Activated naive CD4-positive, alpha-beta T cell treated with anti-CD3 and anti-CD28 coated beads for 36 hours (primary cell): ENCODE measurements at regions of chr16 and their contacts with region 1.

Region 1: DNA sequence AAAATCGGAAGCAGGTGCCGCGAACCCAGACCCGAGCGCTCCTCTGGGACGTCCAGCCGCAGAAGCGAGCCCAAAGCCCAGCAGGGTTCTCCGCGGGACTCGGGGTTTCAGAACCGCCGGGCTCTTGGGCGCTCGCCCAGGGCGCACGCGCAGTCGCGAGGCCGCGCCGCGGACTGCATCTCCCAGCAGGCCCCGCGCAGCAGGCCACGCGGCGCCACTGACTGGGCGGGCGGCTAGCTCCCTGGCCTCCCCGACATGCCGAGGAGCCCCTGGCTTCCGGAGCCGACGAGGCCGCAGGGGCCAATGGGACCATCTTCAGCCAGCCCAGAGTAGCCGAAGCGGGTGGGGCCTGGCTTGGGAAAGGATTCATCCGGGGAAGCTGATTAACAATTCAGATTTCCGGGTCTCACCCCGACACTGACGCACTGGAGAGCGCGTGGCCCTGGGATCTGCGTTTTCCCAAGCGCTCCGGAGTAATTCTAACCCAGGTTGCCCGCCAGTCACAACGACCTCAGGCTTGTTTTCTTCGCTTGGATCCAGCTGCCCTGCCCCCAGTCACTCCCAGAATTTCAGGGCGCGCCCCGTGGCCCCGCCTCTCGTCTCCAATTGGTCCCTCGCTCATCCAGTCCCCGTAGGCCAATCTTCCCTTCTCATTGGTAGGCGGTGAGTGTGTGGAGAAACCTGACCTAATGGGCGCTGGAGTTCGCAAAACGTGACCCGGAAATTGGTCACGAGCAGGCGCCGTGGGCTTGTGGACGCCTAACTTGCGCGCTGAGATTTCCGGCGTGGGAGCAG is at the start of gene ZNF263:
- DNase-seq: peak; percentile 96
- H3K4me3 Mint-ChIP-seq: peak within 1 kb of the TSS; percentile 95
- H3K27ac Mint-ChIP-seq: peak within 1 kb of the TSS; percentile 97
- H3K4me1 Mint-ChIP-seq: peaks cover 28% of the 10 kb centered on the region
- H3K27me3 Mint-ChIP-seq: no peaks in the 10 kb centered on the region
- total RNA-seq, gene ZNF263: 9.1 to 12.2 TPM

Region 2: DNA sequence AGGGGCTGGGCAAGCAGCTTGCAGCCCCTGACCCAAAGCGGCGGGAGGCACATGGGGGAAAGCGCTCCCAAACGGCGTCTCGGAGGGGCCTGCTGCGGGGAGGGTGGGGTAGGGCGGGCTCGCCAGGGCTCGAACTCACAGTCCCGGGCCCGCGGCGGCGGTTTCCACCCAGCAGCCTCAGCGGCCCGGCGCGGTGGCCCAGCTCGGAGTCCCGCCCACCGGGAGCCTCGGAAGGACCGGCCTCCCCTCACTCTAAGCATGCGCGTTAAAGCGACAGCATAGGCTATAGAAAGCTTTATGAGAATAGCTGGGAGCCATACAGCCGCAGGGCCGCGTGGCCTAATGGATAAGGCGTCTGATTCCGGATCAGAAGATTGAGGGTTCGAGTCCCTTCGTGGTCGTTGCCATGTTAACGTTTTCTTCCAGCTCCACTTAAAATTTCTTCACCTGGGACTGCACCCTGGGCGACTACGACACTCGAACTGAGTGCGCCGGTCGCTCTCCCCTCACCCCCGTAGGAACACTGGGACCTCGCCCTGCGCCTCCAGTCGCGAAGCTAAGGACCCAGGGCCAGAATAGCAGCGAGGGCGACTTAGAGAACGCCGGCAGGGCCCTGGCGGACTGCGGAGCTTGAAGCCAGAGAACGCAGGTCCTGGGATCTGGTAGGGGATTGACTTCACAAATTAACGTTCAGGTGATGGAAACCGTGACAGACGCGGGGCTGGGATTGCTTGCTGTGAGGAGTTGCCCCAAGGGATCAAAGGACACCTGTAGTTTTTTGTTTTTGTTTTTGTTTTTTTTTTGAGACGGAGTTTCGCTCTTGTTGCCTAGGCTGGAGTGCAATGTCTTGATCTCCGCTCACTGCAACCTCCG is 132.3 kb before region 1 on chr16:
- CTCF ChIA-PET with region 1: no interaction called
- intact Hi-C with region 1: loop called (anchors 1 kb)
- DNase-seq: peak; percentile 100
- H3K4me3 Mint-ChIP-seq: peak overlapping the region; percentile 88
- H3K27ac Mint-ChIP-seq: peak overlapping the region; percentile 86
- H3K4me1 Mint-ChIP-seq: peaks cover 21% of the 10 kb centered on the region
- H3K27me3 Mint-ChIP-seq: peaks cover 4% of the 10 kb centered on the region

Region 3: GRCh38 chr16:3214904-3215600 is 67.9 kb before region 1 on chr16:
- CTCF ChIA-PET with region 1: no interaction called
- intact Hi-C with region 1: loop called (anchors 1 kb)
- DNase-seq: peak; percentile 76
- H3K4me3 Mint-ChIP-seq: peak overlapping the region; percentile 54
- H3K27ac Mint-ChIP-seq: peak overlapping the region; percentile 96
- H3K4me1 Mint-ChIP-seq: peaks cover 31% of the 10 kb centered on the region
- H3K27me3 Mint-ChIP-seq: no peaks in the 10 kb centered on the region

Region 4: DNA sequence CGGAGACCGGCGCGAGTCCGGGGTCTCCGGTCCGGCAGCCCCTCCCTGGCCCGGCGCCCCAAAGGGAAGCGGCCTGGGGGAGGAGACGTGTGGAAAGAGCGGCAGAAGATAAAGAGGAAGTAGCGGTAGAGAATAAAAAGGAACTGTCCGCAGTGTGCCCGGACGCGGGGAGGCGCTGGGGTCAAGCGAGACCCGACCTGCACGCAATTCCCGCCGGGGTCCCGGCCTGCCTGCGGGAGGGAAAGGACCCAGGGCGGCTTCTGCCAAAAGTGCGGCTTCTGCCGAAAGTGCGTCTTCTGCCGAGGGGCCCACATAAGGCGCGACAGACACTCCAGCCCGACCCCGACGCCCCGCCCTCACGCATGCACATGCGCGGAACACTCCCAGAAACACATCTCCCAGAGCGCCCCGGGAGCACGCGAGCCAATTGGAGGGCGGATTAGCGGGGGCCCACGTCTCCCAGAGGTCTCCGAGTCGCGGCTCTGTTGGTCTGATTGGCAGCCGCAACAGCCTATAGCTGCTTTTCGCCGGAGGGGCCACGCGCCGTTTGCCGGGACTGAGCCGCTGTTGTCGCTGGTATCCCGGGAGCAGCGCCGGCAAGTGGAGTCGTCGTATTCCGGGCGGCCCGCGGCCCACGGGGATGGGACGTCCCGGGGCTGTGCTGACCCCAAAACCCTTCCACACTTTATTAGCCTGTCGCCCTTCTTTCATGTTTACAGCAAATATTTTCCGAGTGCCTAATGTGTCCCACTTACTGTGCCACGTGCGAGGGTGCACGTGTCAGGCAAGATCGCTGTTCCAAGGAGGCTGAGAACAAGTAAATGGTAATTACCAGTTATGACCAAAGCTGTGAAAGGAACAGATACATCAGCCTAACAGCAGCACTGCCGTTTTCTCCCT is 18.5 kb before region 1 on chr16:
- CTCF ChIA-PET with region 1: interaction called, 6 read pairs
- intact Hi-C with region 1: loop called (anchors 1 kb)
- DNase-seq: peak; percentile 98
- H3K4me3 Mint-ChIP-seq: peak overlapping the region; percentile 85
- H3K27ac Mint-ChIP-seq: peak overlapping the region; percentile 88
- H3K4me1 Mint-ChIP-seq: peaks cover 30% of the 10 kb centered on the region
- H3K27me3 Mint-ChIP-seq: no peaks in the 10 kb centered on the region

Region 5: GRCh38 chr16:3364774-3365427 is 82.0 kb after region 1 on chr16:
- CTCF ChIA-PET with region 1: no interaction called
- intact Hi-C with region 1: loop called (anchors 1 kb)
- DNase-seq: peak; percentile 91
- H3K4me3 Mint-ChIP-seq: peak overlapping the region; percentile 78
- H3K27ac Mint-ChIP-seq: peak overlapping the region; percentile 79
- H3K4me1 Mint-ChIP-seq: peaks cover 10% of the 10 kb centered on the region
- H3K27me3 Mint-ChIP-seq: peaks cover 3% of the 10 kb centered on the region

Region 6: GRCh38 chr16:3457434-3458252 is 174.7 kb after region 1 on chr16:
- CTCF ChIA-PET with region 1: no interaction called
- intact Hi-C with region 1: loop called (anchors 1 kb)
- DNase-seq: peak; percentile 91
- H3K4me3 Mint-ChIP-seq: peak overlapping the region; percentile 79
- H3K27ac Mint-ChIP-seq: peak overlapping the region; percentile 88
- H3K4me1 Mint-ChIP-seq: peaks cover 44% of the 10 kb centered on the region
- H3K27me3 Mint-ChIP-seq: no peaks in the 10 kb centered on the region